Activated naive CD4-positive, alpha-beta T cell treated with anti-CD3 and anti-CD28 coated beads for 36 hours (primary cell): ENCODE measurements at regions of chr7 and their contacts with region 1.

Region 1: DNA sequence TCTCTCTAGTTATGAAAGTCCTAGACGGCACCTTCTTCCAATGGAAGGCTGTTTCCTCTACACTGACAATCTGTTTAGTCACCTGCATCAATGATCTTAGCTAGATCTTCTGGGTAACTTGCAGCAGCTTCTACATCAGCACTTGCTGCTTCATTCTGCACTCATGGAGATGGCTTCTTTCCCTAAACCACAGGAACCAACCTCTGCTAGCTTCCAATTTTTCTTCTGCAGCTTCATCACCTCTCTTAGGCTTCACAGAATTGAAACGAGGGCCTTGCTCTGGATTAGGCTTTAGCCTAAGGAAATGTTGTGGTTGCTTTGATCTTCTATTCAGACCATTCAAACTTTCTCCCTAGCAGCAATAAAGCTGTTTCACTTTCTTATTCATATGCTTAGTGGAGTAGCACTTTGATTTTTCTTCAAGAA is 24.6 kb downstream of the NAMPT start:
- DNase-seq: no peak
- H3K4me3 Mint-ChIP-seq: no peak overlapping the region
- H3K27ac Mint-ChIP-seq: peak overlapping the region; percentile 76
- H3K4me1 Mint-ChIP-seq: peaks cover 79% of the 10 kb centered on the region
- H3K27me3 Mint-ChIP-seq: no peaks in the 10 kb centered on the region

Region 2: GRCh38 chr7:106216517-106216922 is 43.6 kb before region 1 on chr7:
- CTCF ChIA-PET with region 1: no interaction called
- intact Hi-C with region 1: no loop called
- DNase-seq: no peak
- H3K4me3 Mint-ChIP-seq: no peak overlapping the region
- H3K27ac Mint-ChIP-seq: no peak overlapping the region
- H3K4me1 Mint-ChIP-seq: peaks cover 4% of the 10 kb centered on the region
- H3K27me3 Mint-ChIP-seq: peaks cover 4% of the 10 kb centered on the region

Region 3: GRCh38 chr7:106279425-106280197 is 19.5 kb after region 1 on chr7:
- CTCF ChIA-PET with region 1: no interaction called
- intact Hi-C with region 1: loop called (anchors 1 kb)
- DNase-seq: peak; percentile 68
- H3K4me3 Mint-ChIP-seq: peak overlapping the region; percentile 92
- H3K27ac Mint-ChIP-seq: peak overlapping the region; percentile 98
- H3K4me1 Mint-ChIP-seq: peaks cover 56% of the 10 kb centered on the region
- H3K27me3 Mint-ChIP-seq: no peaks in the 10 kb centered on the region

Region 4: DNA sequence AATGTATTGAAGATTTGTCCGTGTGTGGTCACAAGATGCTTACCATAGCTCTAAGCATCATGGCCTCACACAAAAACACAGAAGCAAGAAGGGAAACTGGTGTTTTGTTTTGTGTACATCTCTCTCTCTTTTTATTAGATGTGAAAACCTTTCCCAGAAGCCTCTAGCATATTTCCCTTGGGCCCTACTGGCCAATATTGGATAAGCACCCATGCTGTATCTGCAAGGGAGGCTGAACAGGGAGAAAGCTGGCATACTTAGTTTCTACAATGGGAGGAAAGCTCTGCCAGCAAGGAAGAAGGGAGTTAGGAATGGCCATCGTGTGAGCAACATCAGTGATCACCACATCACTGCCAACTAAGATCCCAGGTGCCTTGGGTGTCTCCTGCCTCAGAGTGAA is 34.2 kb after region 1 on chr7:
- CTCF ChIA-PET with region 1: no interaction called
- intact Hi-C with region 1: no loop called
- DNase-seq: no peak
- H3K4me3 Mint-ChIP-seq: no peak overlapping the region
- H3K27ac Mint-ChIP-seq: no peak overlapping the region
- H3K4me1 Mint-ChIP-seq: peaks cover 7% of the 10 kb centered on the region
- H3K27me3 Mint-ChIP-seq: peaks cover 9% of the 10 kb centered on the region